H1 (cell line): ENCODE measurements at regions of chr2 and their contacts with region 1.

Region 1: GRCh38 chr2:160994141-160995002 is 165.9 kb upstream of the TANK start:
- DNase-seq: peak in 1 of 2 experiments; percentile 85
- H3K4me3 ChIP-seq: no peak overlapping the region
- H3K27ac ChIP-seq: no peak overlapping the region
- H3K4me1 ChIP-seq: no peaks in the 10 kb centered on the region; a peak in 1 of 7 replicates
- H3K27me3 ChIP-seq: no peaks in the 10 kb centered on the region
- CTCF ChIP-seq: peak in 2 of 3 experiments; percentile 74 to 82; a peak in 3 of 4 replicates
- EP300 ChIP-seq: no peak
- POLR2A ChIP-seq: no peak
- RAD21 ChIP-seq: peak; percentile 92 to 94

Region 2: GRCh38 chr2:160269803-160270570 is 724.4 kb before region 1 on chr2:
- CTCF ChIA-PET with region 1: interaction called, 13 read pairs
- POLR2A ChIA-PET with region 1: no interaction called
- DNase-seq: peak; percentile 85
- H3K4me3 ChIP-seq: peak overlapping the region; percentile 28 to 60 (median 54)
- H3K27ac ChIP-seq: peak overlapping the region; percentile 57
- H3K4me1 ChIP-seq: peaks cover 3 to 17% (median 11%) of the 10 kb centered on the region in 4 experiments
- H3K27me3 ChIP-seq: peaks cover 2 to 10% (median 7%) of the 10 kb centered on the region in 4 experiments
- CTCF ChIP-seq: peak; percentile 56 to 74 (median 61)
- EP300 ChIP-seq: no peak
- POLR2A ChIP-seq: peak in 1 of 2 experiments; percentile 79; a peak in 2 of 3 replicates
- RAD21 ChIP-seq: peak; percentile 41 to 51

Region 3: GRCh38 chr2:160736148-160737030 is 258.0 kb before region 1 on chr2:
- CTCF ChIA-PET with region 1: no interaction called
- POLR2A ChIA-PET with region 1: no interaction called
- DNase-seq: no peak
- H3K4me3 ChIP-seq: no peak overlapping the region
- H3K27ac ChIP-seq: no peak overlapping the region
- H3K4me1 ChIP-seq: peaks cover 0 to 3% (median 3%) of the 10 kb centered on the region in 4 experiments; a peak in 2 of 7 replicates
- H3K27me3 ChIP-seq: no peaks in the 10 kb centered on the region
- CTCF ChIP-seq: no peak
- EP300 ChIP-seq: no peak
- POLR2A ChIP-seq: no peak
- RAD21 ChIP-seq: no peak

Region 4: DNA sequence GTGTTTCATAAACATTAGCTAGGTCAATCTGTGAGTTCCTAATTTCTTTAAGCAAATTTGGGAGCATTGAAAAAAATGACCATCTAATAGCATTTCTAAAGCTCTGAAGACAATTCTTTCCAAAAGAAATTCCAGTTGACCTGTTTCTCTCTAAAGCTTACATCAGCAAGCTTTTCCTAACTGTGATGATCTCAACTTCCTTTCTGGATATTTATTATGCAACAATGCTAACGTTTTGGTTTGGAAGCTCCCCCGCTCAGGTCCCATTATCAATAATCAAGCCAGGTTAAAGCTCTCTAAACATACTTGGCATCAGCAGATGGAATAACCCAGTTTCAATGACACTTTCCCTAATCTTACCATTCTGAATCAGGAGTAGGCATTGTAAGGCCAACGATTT is 30.4 kb before region 1 on chr2:
- CTCF ChIA-PET with region 1: interaction called, 11 read pairs
- POLR2A ChIA-PET with region 1: no interaction called
- DNase-seq: no peak
- H3K4me3 ChIP-seq: no peak overlapping the region
- H3K27ac ChIP-seq: no peak overlapping the region
- H3K4me1 ChIP-seq: no peaks in the 10 kb centered on the region
- H3K27me3 ChIP-seq: no peaks in the 10 kb centered on the region
- CTCF ChIP-seq: no peak
- EP300 ChIP-seq: no peak
- POLR2A ChIP-seq: no peak
- RAD21 ChIP-seq: no peak

Region 5: DNA sequence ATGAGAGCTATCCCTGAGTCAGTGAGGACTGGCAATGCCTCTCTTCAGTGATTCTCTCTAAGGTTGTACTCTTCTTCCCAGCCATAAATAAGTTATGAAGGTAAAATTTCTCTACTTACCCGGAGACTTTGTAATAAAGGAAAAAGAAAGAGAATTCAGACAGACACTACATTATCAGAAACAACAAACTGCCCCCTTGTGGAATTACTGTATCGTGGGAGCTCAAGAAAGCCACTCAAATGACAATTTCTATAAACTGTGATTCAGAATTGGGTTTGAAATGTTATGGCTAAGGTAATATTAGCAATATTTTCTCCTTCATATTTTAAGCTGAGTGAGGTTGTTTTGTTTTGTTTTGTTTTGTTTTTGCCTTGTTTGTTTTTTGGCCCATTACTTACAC is 10.0 kb after region 1 on chr2:
- CTCF ChIA-PET with region 1: interaction called, 12 read pairs
- POLR2A ChIA-PET with region 1: no interaction called
- DNase-seq: no peak
- H3K4me3 ChIP-seq: no peak overlapping the region
- H3K27ac ChIP-seq: no peak overlapping the region
- H3K4me1 ChIP-seq: no peaks in the 10 kb centered on the region
- H3K27me3 ChIP-seq: no peaks in the 10 kb centered on the region
- CTCF ChIP-seq: peak in 2 of 3 experiments; percentile 13 to 38; a peak in 2 of 4 replicates
- EP300 ChIP-seq: no peak
- POLR2A ChIP-seq: no peak
- RAD21 ChIP-seq: peak; percentile 44 to 49; a peak in 3 of 4 replicates

Region 6: GRCh38 chr2:161068670-161069069 is 74.3 kb after region 1 on chr2:
- CTCF ChIA-PET with region 1: interaction called, 23 read pairs
- POLR2A ChIA-PET with region 1: no interaction called
- DNase-seq: no peak
- H3K4me3 ChIP-seq: no peak overlapping the region
- H3K27ac ChIP-seq: no peak overlapping the region
- H3K4me1 ChIP-seq: no peaks in the 10 kb centered on the region
- H3K27me3 ChIP-seq: no peaks in the 10 kb centered on the region
- CTCF ChIP-seq: no peak
- EP300 ChIP-seq: no peak
- POLR2A ChIP-seq: no peak
- RAD21 ChIP-seq: no peak